AG04450 (cell line): ENCODE measurements at regions of chr2 and their contacts with region 1.

Region 1: DNA sequence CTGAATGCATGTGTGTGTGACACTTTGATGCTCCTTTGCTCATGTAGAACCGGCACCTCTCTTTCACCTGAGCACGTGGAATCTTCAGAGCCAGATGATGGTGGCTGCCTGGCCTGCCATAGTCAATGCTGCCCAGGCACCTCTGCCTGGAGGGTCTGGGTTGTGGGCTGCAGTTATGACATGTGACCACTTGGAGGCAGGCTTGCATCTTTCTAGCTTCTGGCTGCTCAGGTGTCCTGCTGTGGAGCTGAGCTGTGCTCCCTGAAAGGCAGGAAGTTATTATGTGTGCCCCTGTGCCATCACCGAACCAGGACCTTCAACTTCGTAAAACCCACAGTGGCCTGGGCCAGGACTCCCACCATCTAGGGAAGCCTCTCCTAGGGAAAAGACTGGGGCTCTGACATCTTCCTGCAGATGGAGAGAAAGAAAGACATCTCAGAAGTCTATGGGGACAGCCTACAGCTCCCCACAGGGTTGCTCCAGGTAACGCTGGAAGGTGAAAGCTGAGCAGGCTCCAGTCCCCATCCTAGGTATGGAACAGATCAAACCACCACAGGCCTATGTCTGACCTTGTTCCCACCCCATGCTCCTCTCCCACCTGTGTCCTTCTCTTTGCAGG is 30.2 kb downstream of the PSD4 start:
- DNase-seq: no peak
- H3K4me3 ChIP-seq: no peak overlapping the region
- H3K27ac ChIP-seq: no peak overlapping the region
- H3K27me3 ChIP-seq: no peaks in the 10 kb centered on the region
- CTCF ChIP-seq: peak; percentile 85

Region 2: DNA sequence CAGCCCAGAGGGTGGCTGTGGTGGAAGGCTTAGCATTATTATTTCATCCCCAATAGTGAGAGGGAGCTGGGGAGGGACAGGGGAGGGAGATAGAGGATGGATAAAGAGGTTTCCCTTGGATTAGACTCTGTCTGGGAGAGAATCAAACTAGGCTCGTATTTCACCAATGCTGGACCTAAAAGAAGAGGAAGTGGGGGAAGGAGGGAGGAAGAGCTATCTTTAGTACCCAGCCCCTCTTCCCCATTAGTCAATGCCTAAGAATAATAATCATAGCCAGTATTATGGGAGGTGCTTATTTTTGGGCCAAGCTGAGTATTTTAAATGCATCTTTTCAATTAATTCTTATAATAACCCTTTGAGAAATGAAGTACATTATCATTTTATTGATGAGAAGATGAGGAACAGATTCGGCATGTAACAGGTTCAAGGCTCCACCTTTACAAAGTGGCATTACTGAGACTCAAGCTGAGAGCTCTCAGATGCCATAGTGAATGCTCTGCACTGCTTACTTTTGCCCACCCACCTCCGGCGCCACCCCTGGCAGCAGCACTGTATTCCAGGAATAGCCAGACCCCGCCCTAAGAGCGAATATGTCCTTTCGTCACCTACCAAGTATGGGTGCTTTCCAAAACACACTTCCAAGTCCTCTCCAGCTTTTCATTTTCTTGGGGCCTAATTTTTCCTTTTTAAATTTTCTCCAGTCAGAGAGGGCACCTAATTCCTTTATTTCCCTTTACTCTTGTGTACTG is 53.7 kb after region 1 on chr2:
- CTCF ChIA-PET with region 1: interaction called, 11 read pairs
- POLR2A ChIA-PET with region 1: no interaction called
- DNase-seq: no peak
- H3K4me3 ChIP-seq: no peak overlapping the region
- H3K27ac ChIP-seq: no peak overlapping the region
- H3K27me3 ChIP-seq: no peaks in the 10 kb centered on the region
- CTCF ChIP-seq: no peak

Region 3: GRCh38 chr2:113273027-113273551 is 69.1 kb after region 1 on chr2:
- CTCF ChIA-PET with region 1: interaction called, 7 read pairs
- POLR2A ChIA-PET with region 1: interaction called, 12 read pairs
- DNase-seq: peak; percentile 20
- H3K4me3 ChIP-seq: no peak overlapping the region
- H3K27ac ChIP-seq: no peak overlapping the region
- H3K27me3 ChIP-seq: peaks cover 70% of the 10 kb centered on the region
- CTCF ChIP-seq: peak; percentile 46; the same call in 1 of the 2 replicates